T-cell (primary cell): ENCODE measurements at regions of chr15 and their contacts with region 1.

Region 1: DNA sequence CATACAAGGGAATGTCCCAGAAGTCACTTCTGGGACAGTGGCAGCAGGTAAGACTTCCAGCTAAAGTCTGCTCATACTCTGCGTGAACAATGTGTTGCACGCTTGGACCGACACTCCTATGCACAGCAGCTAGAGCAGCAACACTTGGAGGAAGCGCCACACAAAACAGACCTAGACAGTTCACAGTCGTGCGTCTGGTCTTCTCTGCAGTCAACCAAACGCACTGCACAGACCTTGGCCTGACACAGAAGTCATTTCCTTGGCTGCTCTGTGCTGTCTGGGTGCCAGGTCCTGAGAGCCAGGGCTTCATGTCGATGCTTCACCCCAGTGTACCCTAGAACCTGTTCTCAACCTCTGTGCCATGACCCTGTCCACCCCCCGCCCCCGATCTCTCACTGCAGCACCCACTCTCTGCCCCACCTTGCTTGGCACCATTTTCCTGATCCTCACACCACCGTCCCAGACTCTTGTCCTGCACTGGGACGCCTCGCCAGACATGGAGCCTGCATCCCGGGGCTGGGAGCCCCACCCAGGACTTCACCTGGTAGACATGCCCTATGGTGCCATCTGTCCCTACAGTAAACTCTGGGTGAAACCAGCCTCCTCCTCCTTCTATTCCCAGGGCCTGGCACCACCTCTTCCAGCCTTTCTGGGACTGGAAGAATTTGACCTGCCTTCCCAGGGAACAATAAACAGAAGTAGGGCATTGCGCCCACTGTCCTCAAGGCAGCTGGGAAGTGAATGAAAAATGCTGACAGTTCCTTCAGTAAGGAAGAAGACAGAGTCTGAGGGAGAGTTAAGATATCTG is 3.1 kb downstream of the ATP10A start:
- DNase-seq: peak; percentile 40 to 75 (median 61)
- ATAC-seq: peak; percentile 63 to 75 (median 69)
- H3K4me3 ChIP-seq: peak overlapping the region; percentile 87 to 88
- H3K4me3 Mint-ChIP-seq: peak overlapping the region; percentile 96 to 97 (median 97)
- H3K27ac ChIP-seq: peak overlapping the region; percentile 67
- H3K27ac Mint-ChIP-seq: peak overlapping the region; percentile 97 to 100
- H3K4me1 ChIP-seq: peaks cover 36 to 57% of the 10 kb centered on the region in 2 experiments
- H3K4me1 Mint-ChIP-seq: peaks cover 69 to 75% (median 73%) of the 10 kb centered on the region in 3 donors
- H3K27me3 ChIP-seq: peaks cover 0 to 5% of the 10 kb centered on the region in 2 experiments
- H3K27me3 Mint-ChIP-seq: peaks cover 0 to 6% of the 10 kb centered on the region in 2 donors

Region 2: DNA sequence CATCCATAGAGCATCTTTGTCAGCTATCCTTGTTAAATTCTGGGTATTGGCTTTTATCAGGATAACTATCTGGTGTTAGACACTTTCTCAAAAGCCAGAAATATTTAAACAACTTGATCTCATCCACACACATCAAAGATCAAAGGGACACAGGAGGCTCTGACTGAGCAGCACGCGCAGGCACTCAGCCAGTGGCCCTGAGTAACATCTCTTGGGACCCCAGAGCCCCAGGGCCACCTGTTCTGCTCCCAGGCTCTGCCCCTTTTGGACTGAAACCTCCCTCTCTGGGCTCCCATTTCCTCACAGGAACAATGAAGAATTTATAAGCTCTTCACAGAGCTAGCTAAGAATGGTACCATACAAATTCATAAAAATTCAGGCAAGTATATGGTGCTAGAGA is 13.0 kb before region 1 on chr15:
- CTCF ChIA-PET with region 1: interaction called, 5 read pairs
- POLR2A ChIA-PET with region 1: interaction called in 1 of 2 experiments, 10 read pairs
- DNase-seq: peak in 3 of 35 experiments; percentile 21 to 36 (median 32)
- ATAC-seq: peak in 1 of 4 experiments; percentile 14
- H3K4me3 ChIP-seq: peak overlapping the region in 1 of 2 donors; percentile 1
- H3K4me3 Mint-ChIP-seq: peak overlapping the region; percentile 28 to 71 (median 29)
- H3K27ac ChIP-seq: peak overlapping the region; percentile 65
- H3K27ac Mint-ChIP-seq: peak overlapping the region; percentile 91 to 98
- H3K4me1 ChIP-seq: peaks cover 58 to 76% of the 10 kb centered on the region in 2 experiments
- H3K4me1 Mint-ChIP-seq: peaks cover 86 to 89% (median 89%) of the 10 kb centered on the region in 3 donors
- H3K27me3 ChIP-seq: no peaks in the 10 kb centered on the region
- H3K27me3 Mint-ChIP-seq: no peaks in the 10 kb centered on the region